WTC11 (cell line): ENCODE measurements at regions of chr19 and their contacts with region 1.

Region 1: DNA sequence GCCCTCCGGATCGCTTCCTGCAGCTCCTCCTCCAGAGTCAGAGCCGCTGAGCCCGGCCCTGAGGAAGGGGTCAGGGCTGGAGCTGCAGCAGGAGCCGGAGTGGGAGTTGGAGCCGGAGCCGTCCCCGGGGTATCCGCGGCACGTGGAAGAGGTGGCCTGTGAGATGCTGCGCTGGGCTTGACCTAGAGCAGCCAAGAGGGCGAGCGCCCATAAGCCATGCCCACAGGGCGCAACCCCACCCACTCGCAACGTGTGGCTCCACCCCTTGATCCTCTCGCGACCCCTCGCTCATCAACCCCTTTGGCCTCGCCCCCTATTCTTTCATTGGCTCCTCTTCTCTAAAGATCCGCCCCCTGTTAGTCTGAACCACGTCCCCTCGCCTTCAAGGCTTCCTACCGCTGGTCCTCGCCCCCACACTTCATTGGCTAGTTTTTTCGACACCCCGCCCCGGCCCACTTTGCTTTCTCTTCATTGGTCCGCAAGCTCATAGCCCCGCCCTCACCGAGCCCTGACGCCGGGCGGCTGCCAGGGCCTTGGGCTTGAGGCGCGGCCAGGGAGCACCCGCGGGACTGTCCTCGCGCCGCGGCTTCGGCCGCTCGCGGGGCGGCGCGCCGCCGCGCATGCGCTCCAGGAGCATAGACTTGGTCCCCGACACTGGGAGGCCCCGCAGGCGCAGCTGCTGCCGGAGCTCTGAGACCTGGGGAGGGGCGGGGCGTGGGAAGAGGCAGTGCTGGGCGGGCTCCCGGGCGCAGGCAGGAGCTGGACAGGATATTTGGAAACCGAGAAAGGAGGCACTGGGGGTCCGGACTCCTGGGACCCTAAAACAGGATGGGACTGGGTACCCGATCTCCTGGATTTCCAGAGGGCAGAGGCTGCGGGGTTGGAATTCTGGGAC is 5.4 kb downstream of the MAMSTR start:
- DNase-seq: peak; percentile 99
- ATAC-seq: peak; percentile 88
- H3K4me3 Mint-ChIP-seq: peak overlapping the region; percentile 86
- H3K27ac Mint-ChIP-seq: no peak overlapping the region
- H3K4me1 Mint-ChIP-seq: peaks cover 32% of the 10 kb centered on the region
- H3K27me3 Mint-ChIP-seq: peaks cover 3% of the 10 kb centered on the region; the same call in 1 of the 2 replicates
- CTCF ChIP-seq: no peak

Region 2: DNA sequence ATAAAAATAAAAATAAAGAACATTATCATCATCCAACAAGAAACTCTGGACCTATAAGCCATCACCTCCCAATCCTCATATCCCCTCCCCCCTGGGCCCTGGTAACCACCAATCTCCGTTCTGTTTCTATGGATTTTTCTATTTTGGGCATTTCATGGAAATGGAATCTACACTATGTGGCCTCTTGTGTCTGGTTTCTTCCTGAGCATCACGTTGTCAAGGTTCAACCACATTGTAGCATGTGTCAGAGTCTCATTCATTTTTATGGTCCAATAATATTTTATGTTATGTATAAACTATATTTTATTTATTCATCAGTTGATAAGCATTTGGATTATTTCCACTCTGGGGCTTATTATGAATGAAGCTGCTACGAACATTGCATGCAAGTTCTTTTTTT is 135.2 kb before region 1 on chr19:
- CTCF ChIA-PET with region 1: no interaction called
- POLR2A ChIA-PET with region 1: no interaction called
- DNase-seq: no peak
- ATAC-seq: no peak
- H3K4me3 Mint-ChIP-seq: no peak overlapping the region
- H3K27ac Mint-ChIP-seq: no peak overlapping the region
- H3K4me1 Mint-ChIP-seq: peaks cover under 1% of the 10 kb centered on the region; the same call in 1 of the 2 replicates
- H3K27me3 Mint-ChIP-seq: peaks cover 2% of the 10 kb centered on the region; the same call in 1 of the 2 replicates
- CTCF ChIP-seq: no peak

Region 3: DNA sequence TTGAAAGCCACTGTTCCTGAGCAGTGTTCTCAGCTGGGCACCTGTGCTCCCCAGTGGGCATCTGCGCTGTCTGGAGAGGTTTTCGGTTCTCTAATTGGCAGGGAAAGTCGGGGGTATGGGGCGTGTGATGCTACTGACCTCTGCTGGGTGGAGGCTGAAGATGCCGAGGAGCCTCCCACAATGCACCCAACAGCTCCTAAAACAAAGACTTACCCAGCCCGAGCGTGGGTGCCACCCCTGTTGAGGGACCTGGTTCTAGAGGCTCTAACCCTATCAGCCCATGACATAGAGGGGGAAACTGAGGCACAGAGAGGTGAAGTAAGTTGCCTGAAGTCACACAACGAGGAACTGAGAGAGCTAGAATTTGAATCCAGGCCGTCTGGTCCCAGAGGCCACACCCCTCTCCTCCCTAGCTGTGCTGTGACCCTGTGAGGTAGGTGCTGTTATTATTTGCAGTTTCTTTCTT is 105.3 kb before region 1 on chr19:
- CTCF ChIA-PET with region 1: no interaction called
- POLR2A ChIA-PET with region 1: no interaction called
- DNase-seq: peak; percentile 63
- ATAC-seq: peak; percentile 84
- H3K4me3 Mint-ChIP-seq: peak overlapping the region; percentile 37; the same call in 1 of the 2 replicates
- H3K27ac Mint-ChIP-seq: no peak overlapping the region
- H3K4me1 Mint-ChIP-seq: peaks cover 4% of the 10 kb centered on the region
- H3K27me3 Mint-ChIP-seq: no peaks in the 10 kb centered on the region
- CTCF ChIP-seq: no peak

Region 4: GRCh38 chr19:48658483-48658882 is 55.6 kb before region 1 on chr19:
- CTCF ChIA-PET with region 1: no interaction called
- POLR2A ChIA-PET with region 1: no interaction called
- DNase-seq: no peak
- ATAC-seq: no peak
- H3K4me3 Mint-ChIP-seq: no peak overlapping the region
- H3K27ac Mint-ChIP-seq: no peak overlapping the region
- H3K4me1 Mint-ChIP-seq: peaks cover 16% of the 10 kb centered on the region
- H3K27me3 Mint-ChIP-seq: peaks cover 23% of the 10 kb centered on the region
- CTCF ChIP-seq: no peak

Region 5: GRCh38 chr19:48674921-48675824 is 38.9 kb before region 1 on chr19:
- CTCF ChIA-PET with region 1: interaction called, 51 read pairs
- POLR2A ChIA-PET with region 1: interaction called, 3 read pairs
- DNase-seq: peak; percentile 91
- ATAC-seq: peak; percentile 85
- H3K4me3 Mint-ChIP-seq: no peak overlapping the region; the same call in 1 of the 2 replicates
- H3K27ac Mint-ChIP-seq: no peak overlapping the region
- H3K4me1 Mint-ChIP-seq: peaks cover 26% of the 10 kb centered on the region
- H3K27me3 Mint-ChIP-seq: peaks cover 17% of the 10 kb centered on the region
- CTCF ChIP-seq: peak; percentile 81

Region 6: DNA sequence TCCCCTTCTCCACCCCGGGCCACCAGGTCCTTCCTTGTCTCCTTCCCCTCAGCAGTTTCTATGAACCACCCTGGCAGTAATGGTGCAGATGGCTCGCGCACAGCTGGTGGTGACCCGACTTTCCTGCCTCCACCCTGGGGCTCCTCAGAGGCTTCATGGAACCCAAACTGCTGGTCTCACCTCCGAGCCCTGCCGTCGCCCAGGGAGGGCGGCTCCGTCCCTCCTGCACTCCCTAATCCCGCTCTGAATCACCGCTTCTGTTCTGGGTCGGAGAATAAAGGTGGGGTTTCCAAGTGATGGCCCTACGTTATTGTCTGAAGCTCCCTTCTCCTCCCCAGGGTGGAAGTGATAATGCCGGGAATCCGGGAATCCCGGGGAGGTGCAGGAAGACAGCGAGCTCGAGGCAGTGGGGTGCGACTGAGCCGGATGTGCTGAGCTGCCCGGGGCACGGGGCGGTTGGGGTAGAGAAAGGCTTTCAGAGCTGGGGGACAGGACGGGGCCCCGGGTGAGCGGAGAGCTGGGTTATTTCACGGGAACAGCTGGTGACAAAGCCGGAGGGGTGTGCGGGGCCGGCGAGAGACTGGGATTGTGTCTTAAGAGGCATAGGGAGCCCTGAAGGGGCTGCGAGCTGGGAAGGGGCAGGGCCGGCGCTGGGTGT is 17.6 kb before region 1 on chr19:
- CTCF ChIA-PET with region 1: interaction called, 33 read pairs
- POLR2A ChIA-PET with region 1: interaction called, 20 read pairs
- DNase-seq: peak; percentile 46
- ATAC-seq: peak; percentile 53
- H3K4me3 Mint-ChIP-seq: peak overlapping the region; percentile 97
- H3K27ac Mint-ChIP-seq: peak overlapping the region; percentile 79
- H3K4me1 Mint-ChIP-seq: peaks cover 4% of the 10 kb centered on the region
- H3K27me3 Mint-ChIP-seq: no peaks in the 10 kb centered on the region
- CTCF ChIP-seq: no peak

Region 7: GRCh38 chr19:48728882-48729645 is 15.0 kb after region 1 on chr19:
- CTCF ChIA-PET with region 1: interaction called, 31 read pairs
- POLR2A ChIA-PET with region 1: interaction called, 3 read pairs
- DNase-seq: peak; percentile 58
- ATAC-seq: peak; percentile 70
- H3K4me3 Mint-ChIP-seq: peak overlapping the region; percentile 52
- H3K27ac Mint-ChIP-seq: no peak overlapping the region
- H3K4me1 Mint-ChIP-seq: peaks cover 3% of the 10 kb centered on the region
- H3K27me3 Mint-ChIP-seq: peaks cover 46% of the 10 kb centered on the region
- CTCF ChIP-seq: no peak

Region 8: DNA sequence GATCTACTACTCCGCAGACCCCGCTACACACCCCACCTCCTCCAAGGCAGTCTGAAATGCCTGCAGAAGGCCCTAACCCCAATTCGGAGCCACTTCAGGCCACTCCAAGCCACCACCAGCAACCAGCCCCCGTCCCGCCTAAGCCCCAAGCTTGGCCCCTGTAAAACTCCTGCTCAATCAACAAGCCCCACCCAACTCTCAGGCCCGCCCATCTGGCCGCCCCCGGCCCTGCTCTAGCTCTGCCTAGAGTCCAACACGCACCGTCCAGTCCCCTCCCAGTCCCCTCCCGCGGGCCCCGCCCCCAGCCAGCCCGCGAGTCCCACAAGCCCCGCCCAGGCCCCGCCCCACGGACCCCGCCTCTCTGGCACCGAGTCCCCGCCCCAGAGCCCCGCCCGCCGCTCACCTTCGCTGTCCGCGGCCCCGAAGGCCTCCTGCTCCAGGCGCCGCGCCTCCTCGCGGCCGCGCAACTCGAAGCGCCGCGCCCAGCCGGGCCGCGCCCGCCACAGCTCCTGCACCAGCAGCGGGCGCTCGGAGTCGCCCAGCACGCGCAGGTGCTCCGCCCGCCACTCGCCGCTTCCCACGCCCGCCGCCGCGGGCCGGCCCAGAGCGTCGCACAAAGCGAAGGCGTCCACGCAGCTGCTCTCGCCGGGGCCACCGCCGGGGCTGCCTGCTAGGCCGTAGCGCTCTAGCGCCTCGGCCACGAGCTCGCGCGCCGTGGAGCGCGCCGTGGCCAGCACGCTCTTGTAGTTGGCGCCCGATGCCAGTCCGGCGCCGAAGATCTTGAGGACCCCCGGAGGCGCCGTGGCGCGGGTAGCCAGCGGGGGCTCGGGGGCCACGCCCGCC is 24.7 kb after region 1 on chr19:
- CTCF ChIA-PET with region 1: interaction called, 49 read pairs
- POLR2A ChIA-PET with region 1: interaction called, 7 read pairs
- DNase-seq: peak; percentile 99
- ATAC-seq: peak; percentile 81
- H3K4me3 Mint-ChIP-seq: peak overlapping the region; percentile 63
- H3K27ac Mint-ChIP-seq: peak overlapping the region; percentile 94
- H3K4me1 Mint-ChIP-seq: peaks cover 42% of the 10 kb centered on the region
- H3K27me3 Mint-ChIP-seq: peaks cover 49% of the 10 kb centered on the region
- CTCF ChIP-seq: no peak